SK-N-SH (cell line): ENCODE measurements at regions of chr9 and their contacts with region 1.

Region 1: DNA sequence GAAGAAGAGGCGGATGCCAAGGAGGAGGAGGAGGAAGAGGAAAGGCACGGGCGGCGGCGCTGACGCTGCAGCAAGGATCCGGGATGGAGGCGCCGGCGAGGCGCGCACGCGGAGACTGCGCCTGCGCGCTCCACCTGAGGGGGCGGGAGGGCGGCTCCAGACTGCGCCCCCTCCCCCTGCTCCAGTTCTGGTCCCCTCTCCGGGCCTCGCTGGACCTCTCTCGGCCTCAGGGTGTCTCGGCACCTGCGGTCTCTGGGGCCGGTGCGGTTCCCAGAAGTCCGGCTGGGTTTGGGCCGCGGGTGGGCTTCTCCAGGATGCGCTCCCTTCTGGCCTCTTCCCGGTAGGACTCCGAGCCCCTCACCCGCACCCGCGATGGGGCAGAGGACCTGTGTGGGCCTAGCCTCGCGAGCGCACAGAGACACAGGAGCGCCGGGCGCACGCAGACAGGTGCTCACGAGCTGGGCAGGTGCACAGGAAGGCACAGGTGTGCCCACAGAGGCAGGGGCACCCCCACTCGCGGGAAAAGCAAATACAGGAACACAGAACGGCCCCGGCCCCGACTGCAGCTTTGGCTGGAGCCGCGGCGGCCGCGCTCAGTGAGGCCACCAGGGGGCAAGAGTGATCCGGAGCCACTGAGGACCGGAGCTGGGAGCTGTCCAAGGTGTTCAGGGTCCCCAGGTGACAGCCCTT is at the start of gene NPDC1:
- DNase-seq: peak; percentile 96
- H3K4me3 ChIP-seq: peak within 1 kb of the TSS; percentile 62 to 73
- H3K27ac ChIP-seq: peak within 1 kb of the TSS in 1 of 2 experiments; percentile 78; a peak in 2 of 4 replicates
- H3K4me1 ChIP-seq: peaks cover 11 to 25% of the 10 kb centered on the region in 2 experiments; a peak in 2 of 4 replicates
- H3K27me3 ChIP-seq: 0 out of 2 replicates have a peak, but pooled peaks cover 5% of the 10 kb centered on the region
- CTCF ChIP-seq: peak; percentile 87
- EP300 ChIP-seq: no peak
- RAD21 ChIP-seq: peak; percentile 75
- polyA plus RNA-seq, gene NPDC1: 47.4 and 48.1 TPM in 2 replicates

Region 2: GRCh38 chr9:136949817-136950655 is 96.2 kb before region 1 on chr9:
- CTCF ChIA-PET with region 1: interaction called, 10 read pairs
- POLR2A ChIA-PET with region 1: no interaction called
- DNase-seq: peak; percentile 100
- H3K4me3 ChIP-seq: peak overlapping the region; percentile 62 to 67
- H3K27ac ChIP-seq: peak overlapping the region in 1 of 2 experiments; percentile 94; a peak in 2 of 4 replicates
- H3K4me1 ChIP-seq: peaks cover 0 to 30% of the 10 kb centered on the region in 2 experiments; a peak in 2 of 4 replicates
- H3K27me3 ChIP-seq: no peaks in the 10 kb centered on the region
- CTCF ChIP-seq: no peak
- EP300 ChIP-seq: no peak
- RAD21 ChIP-seq: no peak

Region 3: DNA sequence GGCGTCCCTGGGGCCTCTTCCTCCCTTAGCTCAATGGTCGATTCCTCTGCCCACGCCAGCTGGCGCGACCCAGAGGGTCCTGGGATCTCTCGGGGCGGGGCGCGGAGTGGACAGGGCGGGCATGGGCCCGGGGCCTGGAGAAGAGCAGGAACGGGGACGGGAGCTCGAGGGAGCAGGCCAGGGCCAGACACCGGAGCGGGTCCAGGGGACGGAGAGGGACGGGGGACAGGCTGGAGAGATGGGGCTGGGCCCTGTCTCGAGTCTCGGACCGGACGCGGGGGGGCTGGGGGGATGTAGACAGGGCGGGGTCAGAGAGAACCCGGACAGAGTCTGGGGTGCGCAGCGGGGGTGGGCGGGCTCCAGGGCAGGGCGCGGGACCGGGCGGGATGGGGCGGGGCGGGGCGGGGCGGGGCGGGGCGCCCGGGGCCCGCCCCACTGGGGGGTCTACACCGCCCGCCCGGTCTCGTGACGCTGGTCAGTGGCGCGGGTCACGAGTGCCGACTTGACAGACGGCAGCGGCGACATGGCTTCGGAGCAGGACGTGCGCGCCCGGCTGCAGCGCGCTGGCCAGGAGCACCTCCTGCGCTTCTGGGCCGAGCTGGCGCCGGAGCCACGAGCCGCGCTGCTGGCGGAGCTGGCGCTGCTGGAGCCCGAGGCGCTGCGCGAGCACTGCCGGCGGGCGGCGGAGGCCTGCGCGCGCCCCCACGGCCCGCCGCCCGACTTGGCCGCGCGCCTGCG is 30.9 kb after region 1 on chr9 and contains the start of gene UAP1L1:
- CTCF ChIA-PET with region 1: interaction called, 803 read pairs
- POLR2A ChIA-PET with region 1: no interaction called
- DNase-seq: peak; percentile 85
- H3K4me3 ChIP-seq: peak within 1 kb of the TSS; percentile 57 to 60
- H3K27ac ChIP-seq: no peak within 1 kb of the TSS
- H3K4me1 ChIP-seq: peaks cover 0 to 11% of the 10 kb centered on the region in 2 experiments; a peak in 1 of 4 replicates
- H3K27me3 ChIP-seq: no peaks in the 10 kb centered on the region
- CTCF ChIP-seq: no peak
- EP300 ChIP-seq: no peak
- RAD21 ChIP-seq: no peak
- polyA plus RNA-seq, gene UAP1L1: 3.2 and 5.6 TPM in 2 replicates

Region 4: DNA sequence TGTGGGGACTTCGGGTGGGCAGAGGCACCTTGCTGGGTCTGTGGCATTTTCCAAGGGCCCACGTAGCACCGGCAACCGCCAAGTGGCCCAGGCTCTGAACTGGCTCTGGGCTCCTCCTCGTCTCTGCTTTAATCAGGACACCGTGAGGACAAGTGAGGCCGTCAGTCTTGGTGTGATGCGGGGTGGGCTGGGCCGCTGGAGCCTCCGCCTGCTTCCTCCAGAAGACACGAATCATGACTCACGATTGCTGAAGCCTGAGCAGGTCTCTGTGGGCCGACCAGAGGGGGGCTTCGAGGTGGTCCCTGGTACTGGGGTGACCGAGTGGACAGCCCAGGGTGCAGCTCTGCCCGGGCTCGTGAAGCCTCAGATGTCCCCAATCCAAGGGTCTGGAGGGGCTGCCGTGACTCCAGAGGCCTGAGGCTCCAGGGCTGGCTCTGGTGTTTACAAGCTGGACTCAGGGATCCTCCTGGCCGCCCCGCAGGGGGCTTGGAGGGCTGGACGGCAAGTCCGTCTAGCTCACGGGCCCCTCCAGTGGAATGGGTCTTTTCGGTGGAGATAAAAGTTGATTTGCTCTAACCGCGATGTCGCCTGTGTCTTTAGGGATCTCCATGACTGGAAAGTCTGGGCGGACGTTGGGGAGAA is 62.5 kb after region 1 on chr9:
- CTCF ChIA-PET with region 1: interaction called, 11 read pairs
- POLR2A ChIA-PET with region 1: no interaction called
- DNase-seq: no peak
- H3K4me3 ChIP-seq: no peak overlapping the region
- H3K27ac ChIP-seq: no peak overlapping the region
- H3K4me1 ChIP-seq: peaks cover 0 to 3% of the 10 kb centered on the region in 2 experiments; a peak in 1 of 4 replicates
- H3K27me3 ChIP-seq: no peaks in the 10 kb centered on the region
- CTCF ChIP-seq: no peak
- EP300 ChIP-seq: no peak
- RAD21 ChIP-seq: no peak

Region 5: DNA sequence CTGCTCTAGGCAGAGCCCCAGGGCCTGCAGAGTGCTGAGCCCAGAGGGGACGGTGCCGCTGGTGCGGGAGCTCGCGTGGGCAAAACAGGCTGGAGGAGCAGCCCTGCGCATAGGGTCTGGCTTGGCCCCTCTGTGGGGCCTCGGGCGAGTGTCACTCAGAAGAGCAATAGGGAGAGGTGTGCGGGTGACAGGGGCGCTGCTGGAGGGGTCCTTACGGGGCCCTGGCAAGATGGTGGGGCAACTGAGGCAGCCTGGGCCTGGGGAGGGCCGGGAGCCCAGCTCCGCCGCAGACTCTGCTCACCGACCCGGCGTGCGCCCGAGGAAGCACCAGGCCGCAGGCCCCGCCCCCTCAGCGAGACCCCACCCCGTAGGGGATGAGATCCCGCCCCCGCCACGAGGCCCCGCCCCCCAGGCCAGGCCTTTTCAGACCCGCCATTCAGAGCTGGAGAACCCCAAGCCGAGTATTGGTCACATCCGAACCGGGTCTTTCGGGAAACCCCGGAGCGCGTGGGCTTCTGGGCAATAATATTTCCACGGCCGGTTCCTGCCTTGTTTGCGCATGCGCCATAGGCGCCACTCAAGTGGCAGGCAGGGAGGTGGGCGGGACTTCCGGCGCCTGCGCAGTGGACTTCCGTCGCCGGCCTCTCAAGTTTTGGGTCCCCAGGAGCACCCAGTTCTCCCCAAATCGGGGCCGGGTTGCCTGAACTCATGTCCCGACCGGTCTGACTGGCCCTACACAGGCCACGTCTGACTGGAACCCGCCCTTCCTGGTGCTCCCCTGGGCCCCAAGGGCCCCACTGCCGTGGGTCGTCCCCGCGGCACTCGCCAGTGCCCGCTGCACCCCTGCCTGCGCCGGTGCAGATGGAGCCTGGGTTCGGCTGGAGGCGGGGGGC is 177.1 kb after region 1 on chr9:
- CTCF ChIA-PET with region 1: interaction called, 15 read pairs
- POLR2A ChIA-PET with region 1: no interaction called
- DNase-seq: peak; percentile 99
- H3K4me3 ChIP-seq: peak overlapping the region; percentile 69 to 92
- H3K27ac ChIP-seq: peak overlapping the region; percentile 75 to 86
- H3K4me1 ChIP-seq: peaks cover 5 to 41% of the 10 kb centered on the region in 2 experiments; a peak in 1 of 4 replicates
- H3K27me3 ChIP-seq: no peaks in the 10 kb centered on the region
- CTCF ChIP-seq: no peak
- EP300 ChIP-seq: no peak
- RAD21 ChIP-seq: no peak